SK-N-SH (cell line): ENCODE measurements at regions of chr9 and their contacts with region 1.

Region 1: GRCh38 chr9:33623658-33624586 is 99.9 kb downstream of the ANKRD18B start:
- DNase-seq: peak; percentile 83
- H3K4me3 ChIP-seq: no peak overlapping the region
- H3K27ac ChIP-seq: no peak overlapping the region
- H3K4me1 ChIP-seq: peaks cover 5 to 12% of the 10 kb centered on the region in 2 experiments; a peak in 2 of 4 replicates
- H3K27me3 ChIP-seq: no peaks in the 10 kb centered on the region; the same call in 1 of the 2 replicates
- CTCF ChIP-seq: peak; percentile 80
- EP300 ChIP-seq: no peak
- RAD21 ChIP-seq: peak; percentile 94

Region 2: GRCh38 chr9:33638391-33638915 is 14.5 kb after region 1 on chr9:
- CTCF ChIA-PET with region 1: interaction called, 40 read pairs
- POLR2A ChIA-PET with region 1: no interaction called
- DNase-seq: no peak
- H3K4me3 ChIP-seq: no peak overlapping the region
- H3K27ac ChIP-seq: no peak overlapping the region
- H3K4me1 ChIP-seq: peaks cover 0 to 3% of the 10 kb centered on the region in 2 experiments; a peak in 1 of 4 replicates
- H3K27me3 ChIP-seq: peaks cover 8% of the 10 kb centered on the region; the same call in 1 of the 2 replicates
- CTCF ChIP-seq: no peak
- EP300 ChIP-seq: no peak
- RAD21 ChIP-seq: no peak

Region 3: GRCh38 chr9:33676746-33677505 is 53.0 kb after region 1 on chr9:
- CTCF ChIA-PET with region 1: interaction called, 13 read pairs
- POLR2A ChIA-PET with region 1: interaction called, 6 read pairs
- DNase-seq: peak; percentile 84
- H3K4me3 ChIP-seq: peak overlapping the region; percentile 60 to 74
- H3K27ac ChIP-seq: peak overlapping the region; percentile 81 to 93
- H3K4me1 ChIP-seq: no peaks in the 10 kb centered on the region; a peak in 1 of 4 replicates
- H3K27me3 ChIP-seq: no peaks in the 10 kb centered on the region
- CTCF ChIP-seq: 0 out of 2 replicates have a peak, but pooled peaks have one; percentile 8
- EP300 ChIP-seq: no peak; a peak in 1 of 4 replicates
- RAD21 ChIP-seq: no peak

Region 4: GRCh38 chr9:33721674-33722358 is 97.9 kb after region 1 on chr9:
- CTCF ChIA-PET with region 1: interaction called, 496 read pairs
- POLR2A ChIA-PET with region 1: interaction called, 8 read pairs
- DNase-seq: peak; percentile 82
- H3K4me3 ChIP-seq: peak overlapping the region in 1 of 2 experiments; percentile 51; a peak in 1 of 4 replicates
- H3K27ac ChIP-seq: no peak overlapping the region
- H3K4me1 ChIP-seq: peaks cover 0 to 3% of the 10 kb centered on the region in 2 experiments; a peak in 1 of 4 replicates
- H3K27me3 ChIP-seq: no peaks in the 10 kb centered on the region
- CTCF ChIP-seq: peak; percentile 98
- EP300 ChIP-seq: no peak
- RAD21 ChIP-seq: peak; percentile 99

Region 5: GRCh38 chr9:33750307-33750838 is 126.5 kb after region 1 on chr9:
- CTCF ChIA-PET with region 1: interaction called, 10 read pairs
- POLR2A ChIA-PET with region 1: no interaction called
- DNase-seq: peak; percentile 85
- H3K4me3 ChIP-seq: peak overlapping the region; percentile 64 to 71
- H3K27ac ChIP-seq: peak overlapping the region in 1 of 2 experiments; percentile 88; a peak in 2 of 4 replicates
- H3K4me1 ChIP-seq: peaks cover 0 to 14% of the 10 kb centered on the region in 2 experiments; a peak in 2 of 4 replicates
- H3K27me3 ChIP-seq: no peaks in the 10 kb centered on the region
- CTCF ChIP-seq: no peak
- EP300 ChIP-seq: no peak
- RAD21 ChIP-seq: no peak

Region 6: GRCh38 chr9:33835625-33836260 is 211.8 kb after region 1 on chr9:
- CTCF ChIA-PET with region 1: no interaction called
- POLR2A ChIA-PET with region 1: no interaction called
- DNase-seq: no peak
- H3K4me3 ChIP-seq: no peak overlapping the region
- H3K27ac ChIP-seq: no peak overlapping the region
- H3K4me1 ChIP-seq: no peaks in the 10 kb centered on the region
- H3K27me3 ChIP-seq: no peaks in the 10 kb centered on the region
- CTCF ChIP-seq: no peak
- EP300 ChIP-seq: no peak
- RAD21 ChIP-seq: no peak